Breast epithelium (tissue), 4 donors: ENCODE measurements at regions of chr14 and their contacts with region 1.

Region 1: GRCh38 chr14:87756661-87757060 is 236.3 kb downstream of the GALC start:
- DNase-seq: no peak
- H3K4me3 ChIP-seq: no peak overlapping the region
- H3K27ac ChIP-seq: no peak overlapping the region
- H3K4me1 ChIP-seq: no peaks in the 10 kb centered on the region
- H3K27me3 ChIP-seq: no peaks in the 10 kb centered on the region
- CTCF ChIP-seq: no peak
- POLR2A ChIP-seq: no peak

Region 2: DNA sequence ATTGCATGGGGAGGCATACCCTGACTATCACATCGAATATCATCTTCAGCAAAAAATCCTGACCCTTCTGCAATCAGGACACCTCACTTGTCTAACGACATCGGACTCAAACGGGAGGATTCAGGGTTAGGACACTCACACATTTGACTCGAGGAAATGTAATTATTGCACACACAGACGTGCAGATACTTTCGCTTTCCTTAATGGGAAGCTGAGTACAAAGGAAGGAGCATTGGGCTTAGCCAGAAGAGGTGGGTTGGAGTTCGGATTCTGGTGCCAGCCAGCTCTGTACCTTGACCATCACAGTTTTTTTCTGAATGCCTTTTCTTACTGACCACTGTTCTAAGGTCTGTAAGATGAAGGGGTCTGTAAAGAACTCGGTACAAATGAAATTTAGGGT is 24.1 kb before region 1 on chr14:
- intact Hi-C with region 1: no loop called
- DNase-seq: no peak
- H3K4me3 ChIP-seq: no peak overlapping the region
- H3K27ac ChIP-seq: no peak overlapping the region
- H3K4me1 ChIP-seq: no peaks in the 10 kb centered on the region
- H3K27me3 ChIP-seq: no peaks in the 10 kb centered on the region
- CTCF ChIP-seq: no peak
- POLR2A ChIP-seq: no peak

Region 3: DNA sequence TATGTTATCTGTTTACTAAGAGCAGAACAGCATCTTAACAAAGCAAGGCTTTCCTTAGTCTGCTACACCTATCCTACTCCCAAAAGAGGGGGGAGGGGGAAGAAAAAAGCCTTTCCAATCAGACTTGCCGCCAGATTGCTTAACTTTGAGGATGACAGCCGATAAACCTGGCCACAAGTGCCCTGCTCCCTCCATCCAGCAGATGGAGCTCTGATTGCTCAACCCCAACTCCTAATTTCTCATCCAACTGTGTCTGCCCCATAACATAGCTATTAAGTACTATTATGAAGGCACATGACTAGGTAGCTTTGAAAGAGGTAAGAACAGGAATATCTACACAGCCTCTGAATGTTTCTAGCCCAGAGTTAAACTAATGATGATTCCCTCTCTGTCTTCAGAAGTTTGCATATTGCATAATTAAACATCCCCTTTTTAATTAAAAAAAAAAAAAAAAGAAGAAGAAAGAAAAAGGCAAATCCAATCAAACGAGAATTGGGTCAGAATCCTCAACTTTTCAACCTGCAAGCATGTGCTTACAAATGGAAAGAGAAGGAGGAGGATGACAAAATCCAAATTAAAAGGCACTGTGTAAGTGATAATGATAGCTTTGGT is 11.0 kb before region 1 on chr14:
- intact Hi-C with region 1: loop called (anchors 1 kb)
- DNase-seq: no peak
- H3K4me3 ChIP-seq: no peak overlapping the region
- H3K27ac ChIP-seq: no peak overlapping the region
- H3K4me1 ChIP-seq: no peaks in the 10 kb centered on the region
- H3K27me3 ChIP-seq: no peaks in the 10 kb centered on the region
- CTCF ChIP-seq: peak in 1 of 3 donors; percentile 15
- POLR2A ChIP-seq: no peak

Region 4: GRCh38 chr14:87805315-87805723 is 48.7 kb after region 1 on chr14:
- intact Hi-C with region 1: loop called (anchors 2 kb)
- DNase-seq: no peak
- H3K4me3 ChIP-seq: no peak overlapping the region
- H3K27ac ChIP-seq: no peak overlapping the region
- H3K4me1 ChIP-seq: no peaks in the 10 kb centered on the region
- H3K27me3 ChIP-seq: no peaks in the 10 kb centered on the region
- CTCF ChIP-seq: peak in 1 of 3 donors; percentile 25
- POLR2A ChIP-seq: no peak

Region 5: DNA sequence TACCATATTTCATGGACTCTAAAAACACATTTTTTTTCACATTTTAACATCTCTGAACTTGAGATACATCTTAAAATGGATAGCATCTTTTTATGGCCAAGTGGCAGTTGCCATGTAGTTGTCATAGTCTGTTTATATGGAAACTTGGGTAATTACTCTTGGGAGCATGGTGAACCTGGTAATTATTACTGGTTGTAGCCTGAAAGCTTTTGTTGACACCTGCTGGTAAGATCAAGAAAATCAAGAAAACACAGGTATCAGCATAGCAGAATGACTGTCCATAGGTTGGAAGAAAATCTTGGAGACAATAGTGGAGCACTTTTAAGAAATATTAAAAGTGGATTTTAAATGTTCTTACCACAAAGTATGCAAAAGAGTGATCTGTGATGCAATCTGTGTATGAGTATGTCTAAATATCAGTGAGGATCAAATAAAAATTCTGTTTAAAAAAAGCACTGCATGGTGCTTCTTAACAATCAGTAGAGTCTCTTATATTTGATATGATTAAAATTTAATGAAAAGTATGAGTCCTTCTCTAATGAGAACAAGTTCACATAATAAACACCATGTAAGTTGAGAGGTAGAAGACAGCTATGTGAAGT is 1112.0 kb after region 1 on chr14:
- intact Hi-C with region 1: no loop called
- DNase-seq: no peak
- H3K4me3 ChIP-seq: no peak overlapping the region
- H3K27ac ChIP-seq: no peak overlapping the region
- H3K4me1 ChIP-seq: no peaks in the 10 kb centered on the region
- H3K27me3 ChIP-seq: no peaks in the 10 kb centered on the region
- CTCF ChIP-seq: peak in 2 of 3 donors; percentile 33 to 48
- POLR2A ChIP-seq: no peak